Activated CD4-positive, alpha-beta T cell treated with anti-CD3 and anti-CD28 coated beads, Interleukin-2, amount 10 ng/mL, durations not matched to agents 7 days and 5 days (primary cell): ENCODE measurements at regions of chr19 and their contacts with region 1.

Region 1: DNA sequence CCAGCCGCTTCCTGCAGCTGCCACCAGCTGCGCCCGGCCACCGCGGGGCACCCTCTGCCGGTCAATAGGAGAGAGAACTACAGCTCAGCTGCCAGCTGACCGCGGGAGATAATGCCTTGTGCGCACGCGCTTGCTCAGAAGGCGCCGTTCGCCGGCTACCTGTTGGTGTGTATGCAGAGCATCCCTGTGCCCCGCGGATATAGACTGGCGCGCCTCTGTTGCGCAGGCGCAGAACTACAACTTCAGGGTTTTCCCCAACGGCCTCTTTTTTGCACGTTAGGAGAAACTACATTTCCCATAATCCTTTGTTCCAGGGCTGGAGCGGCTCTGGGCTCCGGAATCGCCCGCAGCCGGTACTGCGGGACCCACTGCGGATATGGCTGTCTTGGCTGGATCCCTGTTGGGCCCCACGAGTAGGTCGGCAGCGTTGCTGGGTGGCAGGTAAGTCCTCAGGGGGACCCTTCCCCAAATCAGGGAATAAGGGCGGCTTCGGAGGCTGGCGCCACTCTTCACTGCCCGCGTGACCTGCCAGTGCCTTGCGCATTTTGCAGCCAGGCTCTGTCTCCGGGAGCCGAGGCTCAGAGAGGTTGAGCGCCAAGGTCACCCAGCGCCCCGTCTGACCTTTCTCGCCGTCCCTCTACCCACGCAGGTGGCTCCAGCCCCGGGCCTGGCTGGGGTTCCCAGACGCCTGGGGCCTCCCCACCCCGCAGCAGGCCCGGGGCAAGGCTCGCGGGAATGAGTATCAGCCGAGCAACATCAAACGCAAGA is at the start of gene MRPL34:
- DNase-seq: peak; percentile 97
- H3K4me3 Mint-ChIP-seq: peak within 1 kb of the TSS; percentile 91
- H3K27ac Mint-ChIP-seq: peak within 1 kb of the TSS; percentile 94
- H3K4me1 Mint-ChIP-seq: peaks cover 54% of the 10 kb centered on the region
- H3K27me3 Mint-ChIP-seq: no peaks in the 10 kb centered on the region
- total RNA-seq, gene MRPL34: 79.5 to 80.8 TPM

Region 2: DNA sequence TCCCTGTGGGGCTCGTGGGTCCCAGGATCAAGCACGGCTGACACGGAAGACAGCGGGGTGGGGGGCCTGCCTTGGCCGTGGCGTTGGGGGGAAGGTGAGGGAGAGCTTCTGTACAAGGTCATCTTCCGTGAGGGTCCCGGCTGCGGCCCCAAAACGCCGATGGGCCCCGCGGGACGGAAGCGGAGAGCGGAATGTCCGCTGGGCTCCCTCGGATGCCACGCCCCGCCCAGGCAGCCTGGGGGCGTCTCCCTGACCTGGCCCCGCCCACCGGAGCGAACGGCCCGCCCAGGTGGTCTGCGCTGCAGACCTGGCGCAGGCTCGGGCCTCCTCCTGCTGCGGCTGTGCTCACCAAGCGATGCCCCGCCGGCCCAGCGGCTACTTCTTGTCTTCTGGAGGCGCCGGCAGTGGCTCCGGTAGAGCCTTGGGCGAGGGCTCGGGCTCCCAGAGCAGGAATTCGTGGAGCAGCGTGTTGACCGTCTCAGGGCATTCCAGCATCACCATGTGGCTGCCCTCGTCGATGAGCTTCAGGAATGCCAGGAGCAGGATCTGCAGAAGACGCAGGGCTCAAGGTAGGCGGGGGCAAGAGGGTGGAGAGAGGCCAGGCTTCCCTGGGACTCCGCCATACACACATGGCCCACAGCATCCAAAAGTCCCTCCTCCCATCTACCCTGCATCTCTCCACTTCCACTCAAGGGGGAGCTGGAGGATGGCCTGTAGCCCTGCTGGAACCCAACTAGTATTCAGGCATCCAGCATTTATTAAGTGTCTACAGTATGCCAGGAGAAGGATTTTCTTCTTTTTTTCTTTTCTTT is 13.2 kb before region 1 on chr19:
- CTCF ChIA-PET with region 1: interaction called, 19 read pairs
- POLR2A ChIA-PET with region 1: no interaction called
- DNase-seq: peak; percentile 85
- H3K4me3 Mint-ChIP-seq: peak overlapping the region; percentile 83
- H3K27ac Mint-ChIP-seq: peak overlapping the region; percentile 85
- H3K4me1 Mint-ChIP-seq: peaks cover 11% of the 10 kb centered on the region
- H3K27me3 Mint-ChIP-seq: peaks cover 3% of the 10 kb centered on the region

Region 3: DNA sequence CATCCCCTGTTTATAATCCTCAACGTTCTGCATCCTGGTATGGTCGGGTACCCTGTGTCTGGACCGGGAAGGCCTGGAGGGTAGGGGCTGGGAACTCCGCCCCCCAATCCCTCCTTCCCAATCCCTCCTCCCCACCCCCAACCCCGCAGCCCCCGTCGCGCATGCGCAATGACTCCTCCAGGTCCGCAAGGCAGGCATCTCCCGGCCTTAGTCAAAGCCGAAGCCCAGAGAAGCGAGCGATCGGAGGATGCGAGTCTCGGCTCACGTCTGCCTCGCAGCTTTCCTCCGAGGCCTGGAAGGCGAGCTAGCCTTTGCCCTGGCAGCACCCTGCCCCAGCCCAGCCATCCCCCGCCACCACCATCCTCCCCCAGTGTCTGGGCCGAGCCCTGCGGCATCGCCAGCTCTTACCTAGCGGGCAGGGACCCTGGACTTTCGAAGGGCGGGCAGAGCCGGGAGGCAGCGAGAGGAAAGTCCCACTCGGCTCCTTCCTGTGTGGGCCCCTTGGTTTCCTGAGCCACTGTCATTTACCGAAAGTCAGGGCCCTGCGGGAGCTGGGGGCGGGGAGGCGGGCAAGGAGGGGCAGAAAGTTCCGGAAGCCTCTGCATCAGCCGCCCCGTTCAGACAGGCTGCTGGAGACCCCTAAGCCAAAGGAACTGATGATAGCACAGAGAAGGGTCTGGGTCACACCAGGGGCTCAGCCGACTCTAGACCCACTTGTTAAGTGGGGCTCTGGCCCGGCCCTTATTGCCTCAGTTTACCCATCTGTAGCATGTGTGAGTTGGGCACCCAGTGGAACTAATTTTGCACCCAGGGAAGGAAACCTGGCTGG is 542.1 kb after region 1 on chr19 and contains the start of gene JAK3:
- CTCF ChIA-PET with region 1: no interaction called
- POLR2A ChIA-PET with region 1: interaction called, 10 read pairs
- DNase-seq: peak; percentile 89
- H3K4me3 Mint-ChIP-seq: peak within 1 kb of the TSS; percentile 92
- H3K27ac Mint-ChIP-seq: peak within 1 kb of the TSS; percentile 97
- H3K4me1 Mint-ChIP-seq: peaks cover 69% of the 10 kb centered on the region
- H3K27me3 Mint-ChIP-seq: no peaks in the 10 kb centered on the region
- total RNA-seq, gene JAK3: 172 to 176 TPM